MCF 10A (cell line): ENCODE measurements at regions of chr4 and their contacts with region 1.

Region 1: GRCh38 chr4:5956285-5957021 is 61.8 kb downstream of the C4orf50 start:
- DNase-seq: peak; percentile 3
- H3K4me3 Mint-ChIP-seq: no peak overlapping the region
- H3K27ac Mint-ChIP-seq: no peak overlapping the region
- H3K4me1 Mint-ChIP-seq: no peaks in the 10 kb centered on the region
- H3K27me3 Mint-ChIP-seq: no peaks in the 10 kb centered on the region
- CTCF ChIP-seq: no peak

Region 2: GRCh38 chr4:5969777-5970176 is 13.3 kb after region 1 on chr4:
- CTCF ChIA-PET with region 1: no interaction called
- POLR2A ChIA-PET with region 1: no interaction called
- intact Hi-C with region 1: loop called (anchors 1 kb)
- DNase-seq: no peak
- H3K4me3 Mint-ChIP-seq: no peak overlapping the region
- H3K27ac Mint-ChIP-seq: no peak overlapping the region
- H3K4me1 Mint-ChIP-seq: no peaks in the 10 kb centered on the region
- H3K27me3 Mint-ChIP-seq: no peaks in the 10 kb centered on the region
- CTCF ChIP-seq: no peak